ENCODE measurements at regions of chr3 and their contacts with region 1.

Region 1: DNA sequence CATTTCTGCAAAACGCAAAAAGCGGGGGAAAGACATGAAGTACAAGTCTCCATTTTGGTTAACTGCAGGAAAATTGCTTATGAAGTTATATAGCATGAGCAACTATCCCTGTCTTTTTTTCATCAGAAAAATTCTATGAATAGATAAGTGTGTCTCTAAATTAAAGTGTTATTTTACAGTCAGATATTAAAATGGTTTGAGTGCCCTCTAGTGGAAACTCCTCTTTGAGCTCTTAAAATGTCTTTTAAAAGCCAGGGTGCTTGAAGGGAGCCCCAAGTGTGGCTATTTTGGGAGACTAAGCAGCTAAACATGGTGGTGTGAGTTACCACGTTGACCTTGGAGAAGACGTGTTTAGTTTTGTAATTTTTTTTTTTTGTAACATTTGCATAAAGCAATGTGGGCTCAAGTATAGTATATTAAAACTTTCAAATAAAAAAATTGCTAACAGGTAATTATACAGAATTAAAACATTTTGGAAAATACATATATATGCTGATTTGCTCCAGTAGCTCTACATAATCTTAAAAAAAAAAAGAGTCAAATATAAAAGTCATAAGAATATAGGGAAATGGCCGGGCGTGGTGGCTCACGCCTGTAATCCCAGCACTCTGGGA is 77.2 kb downstream of the PPP2R3A start:
- DNase-seq: no peak
- ATAC-seq: no peak
- H3K4me3 ChIP-seq: no peak overlapping the region
- H3K27ac ChIP-seq: no peak overlapping the region
- H3K4me1 ChIP-seq: no peaks in the 10 kb centered on the region
- H3K27me3 ChIP-seq: no peaks in the 10 kb centered on the region

Region 2: DNA sequence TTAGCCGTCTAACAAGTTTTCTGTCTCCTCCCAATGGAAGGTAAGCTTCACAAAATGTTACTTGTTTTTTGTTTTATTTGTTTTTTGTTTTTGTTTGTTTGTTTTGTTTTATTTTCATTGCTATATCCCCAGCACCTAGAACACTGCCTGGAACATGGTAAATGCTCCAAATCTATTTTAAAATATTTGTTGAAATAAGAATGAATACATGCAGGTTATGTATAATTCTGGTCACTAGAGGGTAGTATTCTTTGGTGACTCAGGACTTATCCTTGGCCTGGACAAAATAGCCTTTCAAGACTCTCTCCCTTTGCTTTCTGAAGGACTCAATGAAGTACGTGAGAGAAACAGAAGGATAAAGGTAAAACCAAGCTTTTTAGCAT is 124.1 kb before region 1 on chr3:
- intact Hi-C with region 1: loop called (anchors 2 kb)
- DNase-seq: no peak
- ATAC-seq: no peak
- H3K4me3 ChIP-seq: no peak overlapping the region
- H3K27ac ChIP-seq: no peak overlapping the region
- H3K4me1 ChIP-seq: no peaks in the 10 kb centered on the region
- H3K27me3 ChIP-seq: no peaks in the 10 kb centered on the region

Region 3: DNA sequence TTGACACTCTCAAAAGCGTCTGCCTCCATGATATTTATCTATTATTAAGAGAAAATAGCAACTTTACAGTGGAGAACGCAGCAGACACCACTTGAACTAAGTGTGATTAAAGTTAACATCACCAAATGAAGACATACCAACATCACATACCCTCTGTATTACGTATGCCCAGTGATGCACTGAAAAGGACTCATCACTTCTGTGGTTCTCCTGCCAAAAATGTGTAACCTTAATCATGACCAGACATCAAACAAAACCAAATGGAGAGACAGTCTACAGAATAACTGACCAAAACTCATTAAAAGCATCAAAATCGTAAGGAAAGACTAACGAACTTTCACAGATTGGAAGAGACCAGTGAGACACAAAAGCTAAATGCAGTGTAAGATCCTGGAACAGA is 26.0 kb after region 1 on chr3:
- intact Hi-C with region 1: no loop called
- DNase-seq: no peak
- ATAC-seq: no peak
- H3K4me3 ChIP-seq: no peak overlapping the region
- H3K27ac ChIP-seq: no peak overlapping the region
- H3K4me1 ChIP-seq: peaks cover 0 to 3% of the 10 kb centered on the region in 2 donors
- H3K27me3 ChIP-seq: no peaks in the 10 kb centered on the region